ENCODE measurements at regions of chr10 and their contacts with region 1.

Region 1: GRCh38 chr10:101103430-101103829 is 27.7 kb upstream of the TLX1 start:
- DNase-seq: no peak
- ATAC-seq: no peak

Region 2: DNA sequence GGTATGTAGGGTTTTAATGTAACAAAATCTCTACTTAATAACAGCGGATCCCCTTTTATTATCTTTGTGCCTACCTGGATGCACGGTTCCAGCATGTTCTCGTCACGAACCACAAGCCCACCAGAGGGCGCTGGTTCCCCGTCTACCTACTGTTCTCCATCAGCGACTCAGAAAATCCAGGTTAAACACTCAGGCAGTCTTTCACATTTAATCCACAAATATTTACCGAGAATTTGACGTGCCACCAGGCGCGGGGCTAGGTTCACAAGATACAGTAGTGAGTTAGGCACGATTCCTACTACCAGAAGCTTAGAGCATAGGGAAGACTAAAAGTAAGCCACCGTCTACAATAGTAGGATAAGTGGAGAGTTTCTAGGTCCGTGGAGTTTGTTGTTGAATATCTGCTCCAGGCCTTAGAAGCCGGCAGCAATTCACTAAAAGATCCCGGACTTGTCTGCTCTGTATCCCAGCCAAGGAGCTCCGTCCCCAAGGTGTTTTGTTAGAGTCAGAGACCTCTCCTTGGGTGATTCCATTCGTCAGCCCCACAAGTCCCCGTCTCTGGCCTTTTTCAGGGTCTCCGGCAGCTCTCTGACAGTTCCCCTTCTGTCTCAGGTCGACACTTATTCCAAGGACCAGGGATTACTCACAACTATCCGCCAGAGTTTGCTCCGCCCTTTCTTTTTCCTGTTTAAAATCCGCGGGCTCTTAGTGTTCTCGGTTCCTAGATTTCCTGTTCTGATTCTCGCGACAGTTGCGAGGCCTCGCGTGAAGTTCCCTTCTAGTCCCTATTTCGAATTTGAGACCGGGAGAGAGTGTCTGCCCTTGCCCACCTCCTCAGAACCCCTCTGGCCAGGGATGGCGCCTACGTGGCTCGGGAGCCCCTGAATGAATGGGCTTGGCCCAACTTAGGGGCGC is 43.1 kb before region 1 on chr10:
- intact Hi-C with region 1: no loop called
- DNase-seq: peak; percentile 96
- ATAC-seq: peak; percentile 87

Region 3: GRCh38 chr10:101123815-101124617 is 20.6 kb after region 1 on chr10:
- intact Hi-C with region 1: loop called (anchors 2 kb)
- DNase-seq: no peak
- ATAC-seq: no peak